ENCODE measurements at regions of chr13 and their contacts with region 1.

Region 1: GRCh38 chr13:45047394-45048310 is 58.3 kb downstream of the GPALPP1 start:
- DNase-seq: peak; percentile 85
- ATAC-seq: peak; percentile 87
- H3K4me3 ChIP-seq: peak overlapping the region; percentile 60
- H3K27ac ChIP-seq: no peak overlapping the region
- H3K4me1 ChIP-seq: peaks cover 9% of the 10 kb centered on the region; the same call in 1 of the 2 replicates
- H3K27me3 ChIP-seq: no peaks in the 10 kb centered on the region
- CTCF ChIP-seq: peak; percentile 89

Region 2: DNA sequence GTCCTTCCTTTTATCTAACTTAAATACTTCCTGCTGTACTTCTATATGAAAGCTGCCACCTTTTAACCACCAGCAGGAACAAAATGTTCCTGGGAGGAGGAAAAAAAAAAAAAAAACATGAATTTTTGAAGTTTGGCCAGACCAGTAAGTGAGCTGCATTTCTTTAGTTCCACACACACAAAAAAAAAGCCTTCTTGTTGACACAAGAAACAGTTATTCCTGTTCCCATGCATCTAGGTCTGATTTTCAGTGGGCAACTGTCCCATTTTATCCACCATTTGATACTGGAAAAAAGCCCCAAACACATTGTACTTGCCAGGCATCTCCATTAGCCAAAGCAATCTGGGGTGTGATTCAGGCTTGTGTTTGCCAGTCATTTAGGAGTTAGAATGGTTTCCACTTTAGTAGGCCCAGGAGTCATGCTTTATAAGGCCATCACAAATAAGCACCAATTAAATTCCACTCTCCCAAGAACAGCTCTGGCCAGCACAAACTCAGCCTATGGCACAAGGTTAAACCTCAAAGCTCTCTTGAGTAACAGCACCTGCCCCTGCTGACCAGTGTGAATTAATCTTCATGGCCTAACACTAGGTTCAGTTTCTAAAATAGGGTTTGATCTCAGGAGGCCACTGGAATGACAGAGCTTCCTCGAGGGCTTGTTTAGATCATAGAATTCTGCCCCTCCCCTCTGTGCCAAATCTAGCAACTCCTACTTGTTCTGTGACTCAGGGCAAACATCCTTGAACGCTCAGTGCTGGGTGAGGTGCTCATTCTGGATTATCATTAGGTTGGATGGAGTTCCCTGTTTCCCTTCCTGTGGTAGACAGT is 125.5 kb before region 1 on chr13:
- CTCF ChIA-PET with region 1: no interaction called
- POLR2A ChIA-PET with region 1: no interaction called
- intact Hi-C with region 1: no loop called
- DNase-seq: peak; percentile 91
- ATAC-seq: peak; percentile 65
- H3K4me3 ChIP-seq: no peak overlapping the region
- H3K27ac ChIP-seq: peak overlapping the region; percentile 91
- H3K4me1 ChIP-seq: peaks cover 27% of the 10 kb centered on the region
- H3K27me3 ChIP-seq: no peaks in the 10 kb centered on the region
- CTCF ChIP-seq: no peak

Region 3: DNA sequence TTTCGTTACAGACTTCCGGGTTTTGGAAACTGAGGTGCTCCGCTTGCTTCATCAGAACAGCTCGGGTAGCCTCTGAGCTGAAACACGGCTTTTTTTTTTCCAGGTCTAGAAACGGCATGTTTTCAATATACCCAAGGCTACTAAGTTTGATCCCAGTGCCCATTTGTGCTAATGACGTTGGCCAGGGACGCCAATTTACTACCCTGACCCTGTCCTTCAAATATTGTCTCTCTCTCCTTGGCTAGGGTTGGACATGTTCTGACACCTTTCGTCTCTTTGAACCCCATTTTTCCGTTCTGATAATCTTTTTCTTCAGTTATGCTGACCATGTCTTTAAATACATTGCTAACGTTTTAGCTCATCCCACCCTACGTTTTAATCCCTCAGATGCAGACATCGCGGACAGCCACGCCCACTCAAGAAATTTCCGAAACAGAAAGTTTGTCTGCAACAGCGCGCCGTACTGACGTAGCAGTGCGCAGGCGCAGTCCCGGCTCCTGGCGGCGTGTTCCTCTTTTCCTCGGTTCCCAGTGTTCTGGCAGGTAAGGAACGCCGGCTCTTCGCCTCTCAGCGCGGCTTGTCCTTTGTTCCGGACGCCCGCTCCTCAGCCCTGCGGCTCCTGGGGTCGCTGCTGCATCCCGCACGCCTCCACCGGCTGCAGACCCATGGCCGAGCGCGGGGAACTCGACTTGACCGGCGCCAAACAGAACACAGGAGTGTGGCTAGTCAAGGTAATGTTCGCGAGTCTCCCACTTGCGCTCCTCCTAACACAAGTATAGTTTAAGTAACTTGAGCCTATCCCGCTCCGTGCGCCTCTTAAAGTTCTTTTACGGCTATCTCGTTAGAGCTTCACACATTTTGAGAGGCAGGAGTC is 72.6 kb after region 1 on chr13 and contains the start of gene GTF2F2:
- CTCF ChIA-PET with region 1: no interaction called
- POLR2A ChIA-PET with region 1: no interaction called
- intact Hi-C with region 1: loop called (anchors 1 kb)
- DNase-seq: peak; percentile 84
- ATAC-seq: peak; percentile 86
- H3K4me3 ChIP-seq: peak within 1 kb of the TSS; percentile 99
- H3K27ac ChIP-seq: peak within 1 kb of the TSS; percentile 83
- H3K4me1 ChIP-seq: peaks cover 13% of the 10 kb centered on the region
- H3K27me3 ChIP-seq: no peaks in the 10 kb centered on the region
- CTCF ChIP-seq: no peak
- total RNA-seq, gene GTF2F2: 24.8 and 28.3 TPM in 2 replicates

Region 4: DNA sequence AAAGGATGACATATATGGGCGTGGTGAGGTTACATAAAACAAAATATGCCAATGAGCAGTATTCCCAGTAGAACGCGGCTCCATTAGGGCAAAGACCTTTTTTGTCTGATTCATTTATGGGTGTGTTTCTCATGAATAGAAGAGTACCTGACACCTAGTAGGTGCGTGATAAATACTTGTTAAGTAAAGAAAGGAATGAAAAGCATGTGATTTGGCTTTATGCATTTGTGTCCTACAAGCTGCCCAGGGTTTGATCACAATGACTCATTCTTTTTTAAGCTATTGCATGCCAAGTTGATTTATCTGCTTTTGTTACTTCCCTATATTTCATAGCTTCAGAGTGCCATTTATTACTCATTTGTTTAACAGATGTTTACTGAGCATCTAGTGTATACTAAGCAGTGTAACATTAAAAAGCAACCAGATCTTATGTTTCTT is 172.3 kb after region 1 on chr13:
- CTCF ChIA-PET with region 1: no interaction called
- POLR2A ChIA-PET with region 1: no interaction called
- intact Hi-C with region 1: loop called (anchors 5 kb)
- DNase-seq: peak; percentile 93
- ATAC-seq: peak; percentile 94
- H3K4me3 ChIP-seq: peak overlapping the region; percentile 45; the same call in 1 of the 2 replicates
- H3K27ac ChIP-seq: peak overlapping the region; percentile 91
- H3K4me1 ChIP-seq: peaks cover 31% of the 10 kb centered on the region
- H3K27me3 ChIP-seq: no peaks in the 10 kb centered on the region
- CTCF ChIP-seq: no peak

Region 5: DNA sequence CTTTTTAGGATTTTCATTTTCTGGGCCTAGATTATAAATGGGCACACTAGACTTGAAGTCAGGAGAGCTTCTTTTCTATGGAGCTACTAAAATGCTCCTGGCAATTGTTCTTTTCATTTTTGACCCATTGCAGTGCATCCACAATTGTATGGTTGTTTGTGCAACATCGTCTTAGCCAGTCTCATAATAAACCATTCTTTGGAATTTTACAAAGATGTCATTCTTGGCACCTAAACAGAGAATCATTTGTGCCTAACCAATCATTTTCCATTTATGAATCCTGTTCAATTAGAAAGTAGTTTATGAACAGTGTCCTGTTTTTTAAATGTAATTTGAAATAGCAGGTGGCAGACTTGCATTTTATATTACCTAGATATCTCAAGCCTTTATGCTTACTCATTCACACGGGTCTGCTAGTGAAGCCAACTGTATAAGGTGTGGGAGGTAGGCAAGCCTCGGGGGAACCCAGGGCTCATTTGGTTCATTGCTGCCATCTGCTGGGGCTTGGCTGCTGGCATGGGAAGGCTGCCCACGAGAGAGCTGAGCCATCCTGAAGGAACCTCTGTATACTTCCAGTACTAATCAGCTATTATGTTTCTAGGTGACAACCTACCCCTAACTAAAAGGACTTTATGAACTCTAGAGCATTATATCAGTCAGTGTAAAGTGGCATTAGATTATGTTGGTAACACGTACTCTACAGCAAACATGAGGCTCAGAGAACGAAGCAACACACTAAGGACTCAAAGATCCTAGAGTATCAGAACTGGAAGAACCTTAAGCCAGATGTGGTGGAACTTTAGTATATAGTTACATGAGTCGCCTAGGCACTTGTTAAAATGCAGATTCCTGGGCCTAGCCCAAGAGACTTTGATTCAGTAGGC is 233.3 kb after region 1 on chr13:
- CTCF ChIA-PET with region 1: interaction called, 23 read pairs
- POLR2A ChIA-PET with region 1: no interaction called
- intact Hi-C with region 1: loop called (anchors 1 kb)
- DNase-seq: peak; percentile 83
- ATAC-seq: peak; percentile 99
- H3K4me3 ChIP-seq: no peak overlapping the region
- H3K27ac ChIP-seq: no peak overlapping the region
- H3K4me1 ChIP-seq: peaks cover 10% of the 10 kb centered on the region; the same call in 1 of the 2 replicates
- H3K27me3 ChIP-seq: no peaks in the 10 kb centered on the region
- CTCF ChIP-seq: peak; percentile 87

Region 6: DNA sequence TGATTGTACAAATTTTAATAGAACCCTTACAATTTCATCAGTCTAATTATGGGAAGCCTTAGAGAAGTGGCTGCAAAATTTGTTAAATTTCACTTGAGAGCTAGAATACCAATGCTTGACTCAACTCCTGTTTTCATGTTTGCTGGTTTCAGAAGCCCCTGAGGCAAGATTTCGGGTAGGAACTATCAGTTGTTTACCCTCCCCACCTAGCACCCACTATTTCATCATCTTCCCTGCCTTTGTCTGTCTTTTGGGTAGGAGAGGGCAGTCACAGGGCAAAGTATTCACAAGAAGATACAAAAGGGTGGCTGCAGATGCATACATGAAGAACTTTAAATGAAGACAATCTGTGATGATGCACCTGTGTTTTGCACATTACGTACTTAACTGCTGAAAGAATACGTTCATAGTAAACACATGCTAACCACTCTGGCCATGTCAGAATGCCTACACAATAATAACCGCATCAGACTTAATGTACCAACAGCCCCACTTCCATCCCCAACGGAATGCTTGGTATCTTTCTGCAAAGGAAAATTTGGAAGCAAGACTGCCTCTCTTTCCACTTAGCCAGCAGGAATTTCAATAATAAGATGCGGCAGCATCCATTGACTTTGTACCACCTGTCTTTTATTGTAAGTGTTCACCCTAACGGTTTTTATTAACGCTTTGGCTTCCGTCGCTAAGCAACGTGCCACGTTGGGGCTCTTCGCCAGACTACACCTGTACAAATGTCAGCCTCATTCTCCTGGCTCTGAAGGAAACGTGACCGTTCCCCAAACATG is 262.9 kb after region 1 on chr13:
- CTCF ChIA-PET with region 1: no interaction called
- POLR2A ChIA-PET with region 1: no interaction called
- intact Hi-C with region 1: loop called (anchors 1 kb)
- DNase-seq: no peak
- ATAC-seq: no peak
- H3K4me3 ChIP-seq: peak overlapping the region; percentile 66
- H3K27ac ChIP-seq: no peak overlapping the region
- H3K4me1 ChIP-seq: peaks cover 12% of the 10 kb centered on the region
- H3K27me3 ChIP-seq: no peaks in the 10 kb centered on the region
- CTCF ChIP-seq: no peak

Region 7: DNA sequence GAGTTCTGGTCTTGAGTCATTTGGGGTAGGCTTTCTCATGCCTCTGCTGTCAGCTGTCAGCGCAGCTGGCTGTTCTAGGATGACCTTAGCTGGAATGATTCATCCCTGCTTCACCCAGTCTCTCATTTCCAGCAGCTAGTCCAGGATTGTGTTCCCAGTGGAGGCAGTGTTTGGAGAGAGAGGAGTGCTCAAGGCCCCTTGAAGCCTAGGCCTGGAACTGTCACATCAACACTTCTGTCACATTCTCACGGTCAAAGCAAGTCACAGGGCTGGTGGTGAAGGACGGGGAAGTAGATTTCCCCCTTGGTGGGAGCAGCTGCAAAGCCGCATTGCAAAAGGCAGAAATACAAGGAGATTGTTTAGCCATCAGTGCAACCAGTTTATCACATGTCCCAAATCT is 278.2 kb after region 1 on chr13:
- CTCF ChIA-PET with region 1: interaction called, 15 read pairs
- POLR2A ChIA-PET with region 1: no interaction called
- intact Hi-C with region 1: no loop called
- DNase-seq: peak; percentile 67
- ATAC-seq: peak; percentile 80
- H3K4me3 ChIP-seq: no peak overlapping the region
- H3K27ac ChIP-seq: peak overlapping the region; percentile 25; the same call in 1 of the 2 replicates
- H3K4me1 ChIP-seq: peaks cover 19% of the 10 kb centered on the region
- H3K27me3 ChIP-seq: no peaks in the 10 kb centered on the region
- CTCF ChIP-seq: no peak